ENCODE measurements at regions of chr5 and their contacts with region 1.

Region 1: DNA sequence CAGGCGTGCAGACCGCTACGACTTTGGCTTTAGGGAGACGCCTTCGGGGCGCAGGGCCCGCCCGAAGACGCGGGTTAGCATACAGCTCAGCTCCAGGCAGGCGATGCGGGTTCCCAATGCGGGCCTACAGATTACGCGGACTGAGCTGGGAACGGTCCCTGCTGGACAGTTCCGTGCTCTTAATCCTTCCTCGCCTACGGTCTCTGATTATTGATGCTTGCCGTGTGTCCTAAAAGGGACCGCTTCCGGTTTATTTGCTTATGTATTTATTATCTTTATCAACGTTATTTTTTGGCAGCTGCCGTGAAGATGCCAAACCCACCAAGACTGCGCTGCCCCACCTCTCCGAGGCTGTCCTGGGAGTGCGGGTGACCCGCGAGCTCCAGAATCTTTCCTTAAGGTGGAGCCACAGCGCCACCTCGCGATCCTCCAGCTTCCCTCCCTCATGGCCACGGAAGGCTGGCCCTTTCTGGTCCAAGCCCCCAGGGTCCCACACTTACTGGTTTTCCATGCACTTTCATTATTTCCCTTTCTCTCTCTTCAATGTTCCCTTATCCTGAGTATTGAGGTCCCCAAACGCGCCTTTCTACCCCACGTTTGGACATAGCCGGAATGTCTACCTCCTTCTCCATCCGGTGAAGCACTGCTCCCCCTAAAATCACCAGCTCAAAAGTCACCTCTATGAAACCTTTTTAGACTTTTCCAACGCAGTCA is 7.0 kb upstream of the EBF1 start:
- DNase-seq: peak in 31 of 35 experiments; percentile 32 to 81 (median 58)
- ATAC-seq: peak; percentile 65 to 83 (median 71)
- H3K4me3 ChIP-seq: peak overlapping the region; percentile 41 to 96
- H3K4me3 Mint-ChIP-seq: peak overlapping the region; percentile 77 to 81 (median 77)
- H3K27ac ChIP-seq: no peak overlapping the region
- H3K27ac Mint-ChIP-seq: no peak overlapping the region
- H3K4me1 ChIP-seq: peaks cover 16 to 26% of the 10 kb centered on the region in 2 experiments
- H3K4me1 Mint-ChIP-seq: peaks cover 27 to 32% (median 28%) of the 10 kb centered on the region in 3 donors
- H3K27me3 ChIP-seq: peaks cover 4 to 46% of the 10 kb centered on the region in 2 experiments
- H3K27me3 Mint-ChIP-seq: peaks cover 48 to 69% of the 10 kb centered on the region in 2 donors

Region 2: GRCh38 chr5:158074992-158075769 is 1031.5 kb before region 1 on chr5:
- CTCF ChIA-PET with region 1: interaction called, 10 to 25 read pairs
- POLR2A ChIA-PET with region 1: no interaction called
- DNase-seq: peak; percentile 1 to 64 (median 26)
- ATAC-seq: peak; percentile 55 to 75 (median 66)
- H3K4me3 ChIP-seq: no peak overlapping the region
- H3K4me3 Mint-ChIP-seq: no peak overlapping the region
- H3K27ac ChIP-seq: no peak overlapping the region
- H3K27ac Mint-ChIP-seq: no peak overlapping the region
- H3K4me1 ChIP-seq: no peaks in the 10 kb centered on the region
- H3K4me1 Mint-ChIP-seq: peaks cover 0 to 6% (median 5%) of the 10 kb centered on the region in 3 donors
- H3K27me3 ChIP-seq: no peaks in the 10 kb centered on the region
- H3K27me3 Mint-ChIP-seq: peaks cover 3 to 18% of the 10 kb centered on the region in 2 donors

Region 3: DNA sequence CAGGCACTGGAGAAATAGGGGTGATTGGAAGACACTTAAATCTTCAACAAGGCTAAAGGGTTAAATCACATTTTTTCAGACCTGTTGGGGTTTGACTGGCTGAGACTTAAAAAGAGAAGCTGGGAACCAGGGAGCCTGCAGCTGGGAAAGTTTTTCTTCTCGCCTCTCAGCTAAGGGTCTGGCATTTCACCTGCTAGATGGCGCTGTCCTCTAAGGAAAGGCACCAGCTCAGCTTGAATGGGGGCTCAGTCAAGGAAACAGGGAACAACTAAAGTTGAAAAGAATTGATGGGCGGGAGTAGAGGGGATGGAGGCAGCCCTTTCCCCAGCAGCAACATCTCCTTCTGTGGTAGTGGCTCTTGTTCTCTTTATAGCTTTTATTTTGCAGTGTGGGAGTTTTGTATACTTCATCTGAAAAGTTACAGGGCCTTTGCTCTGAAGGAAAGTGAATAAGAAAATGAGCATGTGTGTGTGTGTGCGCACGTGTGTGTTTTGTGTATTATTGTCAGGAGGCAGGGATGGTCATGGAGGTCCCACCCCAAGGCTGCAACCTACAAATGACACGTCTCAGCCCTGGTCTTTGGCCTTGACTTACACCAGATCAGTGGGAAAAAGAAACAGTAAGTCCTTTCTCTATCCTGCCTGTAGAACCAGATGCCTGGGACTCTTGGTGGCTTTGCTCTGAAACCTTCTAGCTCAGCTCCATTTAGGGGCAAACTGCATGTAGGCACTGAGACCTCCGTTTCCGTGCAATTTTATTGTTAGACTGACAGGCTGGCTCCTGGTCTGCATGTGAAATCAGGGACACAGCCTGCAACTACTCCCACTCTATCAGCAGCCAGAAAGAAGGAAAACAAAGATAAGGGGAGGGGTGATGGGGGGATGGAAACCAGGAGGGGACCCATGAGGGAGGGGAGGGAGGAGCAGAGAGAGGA is 931.5 kb before region 1 on chr5:
- CTCF ChIA-PET with region 1: interaction called, 10 to 17 read pairs
- POLR2A ChIA-PET with region 1: no interaction called
- DNase-seq: peak in 30 of 35 experiments; percentile 2 to 67 (median 33)
- ATAC-seq: peak; percentile 40 to 70 (median 50)
- H3K4me3 ChIP-seq: no peak overlapping the region
- H3K4me3 Mint-ChIP-seq: no peak overlapping the region
- H3K27ac ChIP-seq: no peak overlapping the region
- H3K27ac Mint-ChIP-seq: no peak overlapping the region
- H3K4me1 ChIP-seq: no peaks in the 10 kb centered on the region
- H3K4me1 Mint-ChIP-seq: no peaks in the 10 kb centered on the region
- H3K27me3 ChIP-seq: no peaks in the 10 kb centered on the region
- H3K27me3 Mint-ChIP-seq: peaks cover 0 to 8% of the 10 kb centered on the region in 2 donors

Region 4: DNA sequence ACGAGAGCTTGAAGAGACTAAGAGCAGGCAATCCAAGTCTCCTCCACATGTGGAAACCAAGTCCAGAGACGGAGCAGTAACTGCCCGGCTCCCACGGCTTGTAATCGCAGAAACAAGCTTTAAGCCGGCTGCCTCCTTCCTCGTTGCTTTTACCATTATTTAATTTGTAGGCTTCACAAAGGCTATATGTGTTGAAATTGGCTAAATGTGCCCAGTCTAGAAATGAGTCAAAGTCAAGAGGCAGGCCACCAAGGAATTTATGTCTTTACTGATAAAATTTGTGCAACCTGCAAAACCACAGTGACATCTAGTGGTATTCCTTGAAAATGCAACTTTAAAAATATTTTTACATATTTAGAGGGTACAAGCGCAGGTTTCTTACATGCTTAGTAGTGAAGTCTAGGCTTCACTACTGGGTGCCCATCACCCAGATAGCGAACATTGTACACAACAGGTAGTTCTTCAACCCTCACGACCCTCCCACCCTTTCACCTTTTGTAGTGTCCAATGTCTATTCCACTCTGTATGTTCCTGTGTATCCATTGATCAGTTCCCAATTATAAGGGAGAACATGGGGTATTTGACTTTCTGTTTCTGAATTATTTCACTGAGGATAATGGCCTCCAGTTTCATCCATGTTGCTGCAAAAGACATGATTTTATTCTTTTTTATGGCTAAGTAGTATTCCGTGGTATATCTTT is 26.5 kb after region 1 on chr5:
- CTCF ChIA-PET with region 1: interaction called, 8 to 12 read pairs
- POLR2A ChIA-PET with region 1: no interaction called
- DNase-seq: peak in 2 of 35 experiments; percentile 10 to 65
- ATAC-seq: peak in 3 of 4 experiments; percentile 30 to 35 (median 32)
- H3K4me3 ChIP-seq: no peak overlapping the region
- H3K4me3 Mint-ChIP-seq: no peak overlapping the region
- H3K27ac ChIP-seq: no peak overlapping the region
- H3K27ac Mint-ChIP-seq: no peak overlapping the region
- H3K4me1 ChIP-seq: no peaks in the 10 kb centered on the region
- H3K4me1 Mint-ChIP-seq: no peaks in the 10 kb centered on the region
- H3K27me3 ChIP-seq: no peaks in the 10 kb centered on the region
- H3K27me3 Mint-ChIP-seq: peaks cover 7 to 13% of the 10 kb centered on the region in 2 donors

Measured in T-cell (primary cell).